AG04449 (cell line): ENCODE measurements at regions of chr2 and their contacts with region 1.

Region 1: DNA sequence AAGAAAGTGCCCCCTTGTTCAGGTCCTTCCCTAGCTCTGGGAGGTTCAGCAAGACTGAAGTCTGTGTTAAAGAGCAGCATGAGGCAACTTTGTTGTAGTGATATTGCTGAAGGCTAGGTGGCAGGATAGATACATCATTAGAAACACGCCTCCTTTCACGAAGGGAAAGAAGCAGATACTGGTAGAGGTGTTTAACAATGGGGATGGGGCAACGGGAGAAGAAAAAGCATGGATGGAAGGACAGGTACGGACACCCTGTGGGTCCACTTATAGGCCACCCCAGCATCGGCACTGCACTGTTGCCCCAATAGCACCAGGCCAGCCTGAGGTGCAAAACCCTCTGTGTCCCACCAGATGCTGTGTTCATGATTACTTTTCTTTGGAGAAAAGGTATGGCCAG is 3.5 kb upstream of the IGFBP5 start:
- DNase-seq: no peak
- H3K4me3 ChIP-seq: no peak overlapping the region
- CTCF ChIP-seq: peak; percentile 66

Region 2: GRCh38 chr2:216680951-216681629 is 17.8 kb before region 1 on chr2:
- CTCF ChIA-PET with region 1: interaction called, 17 read pairs
- POLR2A ChIA-PET with region 1: no interaction called
- DNase-seq: no peak
- H3K4me3 ChIP-seq: no peak overlapping the region
- CTCF ChIP-seq: no peak

Region 3: DNA sequence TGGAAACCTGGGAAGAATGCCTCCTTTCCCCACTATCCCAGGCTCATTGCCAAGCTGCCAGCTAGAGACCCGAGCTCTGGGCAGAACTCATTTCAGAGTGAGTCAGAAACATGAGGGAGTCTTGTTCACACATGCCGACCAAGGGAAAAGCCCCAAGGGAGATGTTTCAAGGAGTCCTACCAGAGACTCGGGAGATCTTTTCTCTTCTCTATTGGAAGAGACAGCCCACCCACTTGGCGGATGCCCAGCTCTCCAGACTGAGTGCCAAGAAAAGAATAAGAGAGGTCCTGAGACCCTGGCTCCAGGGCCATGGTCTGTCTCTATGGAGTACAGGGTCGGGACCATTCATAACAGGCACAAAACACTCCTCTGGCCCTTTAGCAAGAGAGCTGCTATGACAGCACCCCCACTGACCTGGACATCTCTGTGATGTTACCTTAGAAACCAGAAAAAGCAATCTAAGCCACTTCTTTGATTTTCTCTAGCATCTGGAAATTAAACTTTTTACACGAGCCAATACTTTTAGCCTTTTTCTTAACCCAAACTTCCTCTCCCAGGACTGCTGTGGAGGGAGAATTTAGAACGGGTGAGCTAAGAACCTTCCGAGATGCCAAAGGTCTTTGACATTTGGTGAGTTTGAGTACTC is 14.9 kb after region 1 on chr2:
- CTCF ChIA-PET with region 1: interaction called, 12 read pairs
- POLR2A ChIA-PET with region 1: no interaction called
- DNase-seq: peak; percentile 89
- H3K4me3 ChIP-seq: no peak overlapping the region
- CTCF ChIP-seq: no peak

Region 4: GRCh38 chr2:217105733-217106649 is 407.1 kb after region 1 on chr2:
- CTCF ChIA-PET with region 1: interaction called, 15 read pairs
- POLR2A ChIA-PET with region 1: interaction called, 7 read pairs
- DNase-seq: peak; percentile 97
- H3K4me3 ChIP-seq: no peak overlapping the region
- CTCF ChIP-seq: no peak